Naive thymus-derived CD4-positive, alpha-beta T cell (primary cell): ENCODE measurements at regions of chr1 and their contacts with region 1.

Region 1: GRCh38 chr1:167553136-167554027 is at the start of gene CREG1:
- DNase-seq: peak; percentile 82 to 92 (median 88)
- ATAC-seq: peak; percentile 98
- H3K4me3 ChIP-seq: peak within 1 kb of the TSS; percentile 71
- H3K4me3 Mint-ChIP-seq: peak within 1 kb of the TSS; percentile 85 to 97 (median 92)
- H3K27ac ChIP-seq: peak within 1 kb of the TSS; percentile 72
- H3K27ac Mint-ChIP-seq: peak within 1 kb of the TSS; percentile 43 to 88 (median 80)
- H3K4me1 ChIP-seq: peaks cover 19% of the 10 kb centered on the region in 2 donors
- H3K4me1 Mint-ChIP-seq: peaks cover 35 to 58% (median 46%) of the 10 kb centered on the region in 7 donors
- H3K27me3 ChIP-seq: no peaks in the 10 kb centered on the region
- H3K27me3 Mint-ChIP-seq: peaks cover 0 to 4% (median 0%) of the 10 kb centered on the region in 5 donors
- total RNA-seq, gene CREG1: 10.6 to 33.4 (median 23.1) TPM

Region 2: DNA sequence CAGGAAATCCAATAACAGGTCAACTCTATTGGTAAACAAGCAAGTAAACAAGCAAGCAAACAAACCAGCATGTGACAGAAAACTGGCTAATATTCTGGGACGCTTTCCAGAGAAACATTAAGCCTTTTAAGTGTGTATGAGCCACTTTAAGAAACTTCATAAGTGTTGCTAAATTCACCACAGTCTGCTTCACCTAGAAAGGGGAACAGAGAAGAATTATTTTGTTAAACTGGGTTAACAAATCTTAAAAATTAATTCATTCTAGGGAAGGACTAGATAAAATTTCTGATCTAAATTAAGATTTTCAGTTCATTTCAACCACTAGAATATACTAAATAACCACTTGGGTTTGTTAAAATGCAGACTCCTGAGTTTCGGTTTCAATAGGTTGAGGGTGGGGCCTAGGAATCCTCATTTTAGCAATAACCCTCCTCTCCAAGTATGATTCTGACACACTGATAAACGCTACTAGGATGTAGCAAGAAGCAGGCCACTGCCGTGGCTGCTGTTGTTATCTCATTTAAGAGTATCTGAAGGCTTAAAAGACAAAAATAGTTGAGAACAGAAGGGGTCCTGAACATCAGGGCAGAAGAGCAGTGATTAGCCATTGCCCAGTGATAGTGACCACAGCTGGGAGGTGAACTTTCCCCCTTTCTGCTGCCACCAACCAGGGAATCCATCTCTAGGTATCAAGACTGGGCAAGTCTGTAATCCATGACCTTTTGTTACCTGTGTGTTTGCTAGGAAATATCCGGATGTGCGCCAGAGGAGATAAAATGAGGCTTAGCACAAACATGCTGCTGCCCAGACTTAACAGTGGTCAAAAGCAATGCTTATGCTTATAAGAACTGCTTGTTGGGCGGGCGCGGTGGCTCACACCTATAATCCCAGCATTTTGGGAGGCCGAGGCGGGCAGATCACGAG is 11.0 kb before region 1 on chr1:
- CTCF ChIA-PET with region 1: interaction called, 7 read pairs
- POLR2A ChIA-PET with region 1: interaction called, 7 read pairs
- intact Hi-C with region 1: loop called (anchors 1 to 2 kb)
- DNase-seq: no peak
- ATAC-seq: no peak
- H3K4me3 ChIP-seq: no peak overlapping the region
- H3K4me3 Mint-ChIP-seq: peak overlapping the region in 1 of 10 donors; percentile 15
- H3K27ac ChIP-seq: no peak overlapping the region
- H3K27ac Mint-ChIP-seq: peak overlapping the region in 2 of 9 donors; percentile 33 to 68
- H3K4me1 ChIP-seq: no peaks in the 10 kb centered on the region
- H3K4me1 Mint-ChIP-seq: peaks cover 3 to 56% (median 5%) of the 10 kb centered on the region in 7 donors
- H3K27me3 ChIP-seq: no peaks in the 10 kb centered on the region
- H3K27me3 Mint-ChIP-seq: no peaks in the 10 kb centered on the region

Region 3: GRCh38 chr1:167573026-167573425 is 19.6 kb after region 1 on chr1:
- CTCF ChIA-PET with region 1: no interaction called
- POLR2A ChIA-PET with region 1: no interaction called
- intact Hi-C with region 1: no loop called
- DNase-seq: no peak
- ATAC-seq: no peak
- H3K4me3 ChIP-seq: no peak overlapping the region
- H3K4me3 Mint-ChIP-seq: no peak overlapping the region
- H3K27ac ChIP-seq: no peak overlapping the region
- H3K27ac Mint-ChIP-seq: no peak overlapping the region
- H3K4me1 ChIP-seq: no peaks in the 10 kb centered on the region
- H3K4me1 Mint-ChIP-seq: no peaks in the 10 kb centered on the region
- H3K27me3 ChIP-seq: no peaks in the 10 kb centered on the region
- H3K27me3 Mint-ChIP-seq: peaks cover 0 to 29% (median 4%) of the 10 kb centered on the region in 5 donors

Region 4: DNA sequence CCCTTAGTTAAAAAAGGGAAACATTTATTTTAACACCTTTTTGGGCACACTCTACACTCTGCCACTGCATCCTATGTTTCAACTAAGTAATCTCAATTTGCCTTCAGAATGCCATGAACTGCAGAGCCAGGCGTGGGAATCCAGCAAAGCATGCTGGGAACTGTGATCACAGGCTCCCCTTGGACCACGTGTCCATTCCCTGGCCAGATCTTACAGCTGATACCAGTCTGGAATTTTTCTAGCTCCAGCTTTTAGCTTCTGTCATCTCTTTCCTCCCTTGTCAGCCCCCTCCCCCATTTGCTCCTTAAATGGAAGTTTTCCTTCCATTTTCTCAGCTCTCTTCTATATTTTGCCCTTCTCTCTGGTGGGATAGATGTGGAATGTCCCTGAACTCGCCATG is 106.1 kb after region 1 on chr1:
- CTCF ChIA-PET with region 1: no interaction called
- POLR2A ChIA-PET with region 1: no interaction called
- intact Hi-C with region 1: no loop called
- DNase-seq: no peak
- ATAC-seq: no peak
- H3K4me3 ChIP-seq: no peak overlapping the region
- H3K4me3 Mint-ChIP-seq: peak overlapping the region in 3 of 10 donors; percentile 46 to 61 (median 52)
- H3K27ac ChIP-seq: no peak overlapping the region
- H3K27ac Mint-ChIP-seq: peak overlapping the region in 8 of 9 donors; percentile 37 to 94 (median 85)
- H3K4me1 ChIP-seq: peaks cover 21 to 63% of the 10 kb centered on the region in 2 donors
- H3K4me1 Mint-ChIP-seq: peaks cover 68 to 98% (median 94%) of the 10 kb centered on the region in 7 donors
- H3K27me3 ChIP-seq: no peaks in the 10 kb centered on the region
- H3K27me3 Mint-ChIP-seq: no peaks in the 10 kb centered on the region